MCF 10A (cell line): ENCODE measurements at regions of chr11 and their contacts with region 1.

Region 1: GRCh38 chr11:34366522-34366921 is 8.7 kb upstream of the ABTB2 start:
- DNase-seq: peak; percentile 62
- H3K4me3 Mint-ChIP-seq: no peak overlapping the region
- H3K27ac Mint-ChIP-seq: no peak overlapping the region
- H3K4me1 Mint-ChIP-seq: peaks cover 7% of the 10 kb centered on the region
- H3K27me3 Mint-ChIP-seq: no peaks in the 10 kb centered on the region
- CTCF ChIP-seq: peak; percentile 56

Region 2: GRCh38 chr11:34174412-34175041 is 192.0 kb before region 1 on chr11:
- CTCF ChIA-PET with region 1: interaction called, 62 read pairs
- POLR2A ChIA-PET with region 1: no interaction called
- intact Hi-C with region 1: no loop called
- DNase-seq: peak; percentile 76
- H3K4me3 Mint-ChIP-seq: peak overlapping the region; percentile 45
- H3K27ac Mint-ChIP-seq: no peak overlapping the region
- H3K4me1 Mint-ChIP-seq: no peaks in the 10 kb centered on the region
- H3K27me3 Mint-ChIP-seq: no peaks in the 10 kb centered on the region
- CTCF ChIP-seq: peak; percentile 96

Region 3: DNA sequence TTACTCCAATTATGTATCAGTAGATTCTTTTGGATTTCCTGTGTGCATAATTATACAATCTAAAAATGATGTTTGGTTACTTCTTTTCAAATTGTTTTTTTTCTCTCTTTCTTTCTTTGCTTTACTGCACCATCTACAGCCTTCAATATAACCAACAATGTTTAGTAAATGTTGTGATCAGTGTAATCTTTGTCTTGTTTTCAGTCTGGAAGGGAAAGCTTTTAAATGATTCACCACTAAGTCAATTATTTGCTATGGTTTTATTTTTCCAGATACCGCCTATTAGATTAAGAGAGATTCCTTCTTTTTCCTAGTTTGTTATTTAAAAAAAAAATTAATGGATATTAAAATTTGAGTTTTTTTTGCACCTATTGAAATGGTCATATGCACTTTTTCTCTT is 21.1 kb after region 1 on chr11:
- CTCF ChIA-PET with region 1: no interaction called
- POLR2A ChIA-PET with region 1: no interaction called
- intact Hi-C with region 1: no loop called
- DNase-seq: no peak
- H3K4me3 Mint-ChIP-seq: no peak overlapping the region
- H3K27ac Mint-ChIP-seq: no peak overlapping the region
- H3K4me1 Mint-ChIP-seq: no peaks in the 10 kb centered on the region
- H3K27me3 Mint-ChIP-seq: no peaks in the 10 kb centered on the region
- CTCF ChIP-seq: no peak

Region 4: DNA sequence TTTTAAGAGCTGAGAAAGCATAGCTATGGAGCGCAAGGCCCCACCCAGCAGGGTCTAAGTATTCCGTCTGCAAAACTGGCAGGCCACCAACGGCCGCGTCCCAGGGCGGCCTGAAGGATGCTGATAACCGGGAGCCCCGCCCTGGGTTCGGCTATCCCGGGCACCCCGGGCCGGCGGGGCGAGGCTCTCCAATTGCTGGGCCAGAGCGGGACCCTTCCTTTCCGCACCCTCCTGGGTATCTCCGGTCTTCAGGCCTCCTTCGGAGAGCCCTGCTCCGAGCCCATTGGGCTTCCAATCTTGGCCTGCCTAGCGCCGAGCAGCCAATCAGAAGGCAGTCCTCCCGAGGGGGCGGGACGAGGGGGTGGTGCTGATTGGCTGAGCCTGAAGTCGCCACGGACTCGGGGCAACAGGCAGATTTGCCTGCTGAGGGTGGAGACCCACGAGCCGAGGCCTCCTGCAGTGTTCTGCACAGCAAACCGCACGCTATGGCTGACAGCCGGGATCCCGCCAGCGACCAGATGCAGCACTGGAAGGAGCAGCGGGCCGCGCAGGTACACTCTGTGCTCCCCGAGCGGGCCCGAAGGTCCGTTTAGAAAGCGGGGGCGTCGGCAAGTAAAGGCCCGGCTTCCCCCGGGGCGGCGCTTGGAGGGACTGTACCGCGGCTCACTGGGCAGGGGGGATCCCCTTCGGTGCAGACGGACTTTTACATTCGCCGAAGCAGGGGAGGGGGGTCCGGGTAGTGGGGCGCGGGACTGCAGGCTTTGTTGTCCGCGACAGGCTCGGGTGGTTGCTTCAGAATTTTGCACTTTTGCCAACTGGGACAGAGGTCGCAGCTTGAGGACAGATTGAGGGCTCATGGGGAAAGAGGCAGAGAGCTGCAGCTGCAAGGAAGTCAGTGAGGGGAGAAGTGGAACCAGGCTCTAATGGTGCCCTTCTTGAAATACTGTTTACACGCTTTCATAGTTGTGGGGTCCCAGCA is 72.3 kb after region 1 on chr11 and contains the start of gene CAT:
- CTCF ChIA-PET with region 1: interaction called, 8 read pairs
- POLR2A ChIA-PET with region 1: interaction called, 30 read pairs
- intact Hi-C with region 1: loop called (anchors 2 kb)
- DNase-seq: peak; percentile 97
- H3K4me3 Mint-ChIP-seq: peak within 1 kb of the TSS; percentile 97
- H3K27ac Mint-ChIP-seq: peak within 1 kb of the TSS; percentile 96
- H3K4me1 Mint-ChIP-seq: peaks cover 9% of the 10 kb centered on the region
- H3K27me3 Mint-ChIP-seq: no peaks in the 10 kb centered on the region
- CTCF ChIP-seq: no peak
- total RNA-seq, gene CAT: 9.5 and 12.1 TPM in 2 replicates

Region 5: GRCh38 chr11:34487430-34487829 is 120.9 kb after region 1 on chr11:
- CTCF ChIA-PET with region 1: interaction called, 158 read pairs
- POLR2A ChIA-PET with region 1: interaction called, 4 read pairs
- intact Hi-C with region 1: loop called (anchors 1 kb)
- DNase-seq: no peak
- H3K4me3 Mint-ChIP-seq: no peak overlapping the region
- H3K27ac Mint-ChIP-seq: no peak overlapping the region
- H3K4me1 Mint-ChIP-seq: no peaks in the 10 kb centered on the region
- H3K27me3 Mint-ChIP-seq: no peaks in the 10 kb centered on the region
- CTCF ChIP-seq: no peak

Region 6: GRCh38 chr11:34501500-34501899 is 135.0 kb after region 1 on chr11:
- CTCF ChIA-PET with region 1: interaction called, 158 read pairs
- POLR2A ChIA-PET with region 1: no interaction called
- intact Hi-C with region 1: no loop called
- DNase-seq: peak; percentile 65
- H3K4me3 Mint-ChIP-seq: no peak overlapping the region
- H3K27ac Mint-ChIP-seq: peak overlapping the region; percentile 49
- H3K4me1 Mint-ChIP-seq: peaks cover 14% of the 10 kb centered on the region
- H3K27me3 Mint-ChIP-seq: no peaks in the 10 kb centered on the region
- CTCF ChIP-seq: no peak